Activated CD4-positive, alpha-beta T cell treated with anti-CD3 and anti-CD28 coated beads for 36 hours (primary cell): ENCODE measurements at regions of chr2 and their contacts with region 1.

Region 1: GRCh38 chr2:64330281-64331113 is 123.5 kb upstream of the LGALSL start:
- DNase-seq: peak; percentile 87
- ATAC-seq: no peak
- H3K4me3 Mint-ChIP-seq: peak overlapping the region; percentile 8
- H3K27ac Mint-ChIP-seq: no peak overlapping the region
- H3K4me1 Mint-ChIP-seq: peaks cover 48% of the 10 kb centered on the region
- H3K27me3 Mint-ChIP-seq: no peaks in the 10 kb centered on the region

Region 2: DNA sequence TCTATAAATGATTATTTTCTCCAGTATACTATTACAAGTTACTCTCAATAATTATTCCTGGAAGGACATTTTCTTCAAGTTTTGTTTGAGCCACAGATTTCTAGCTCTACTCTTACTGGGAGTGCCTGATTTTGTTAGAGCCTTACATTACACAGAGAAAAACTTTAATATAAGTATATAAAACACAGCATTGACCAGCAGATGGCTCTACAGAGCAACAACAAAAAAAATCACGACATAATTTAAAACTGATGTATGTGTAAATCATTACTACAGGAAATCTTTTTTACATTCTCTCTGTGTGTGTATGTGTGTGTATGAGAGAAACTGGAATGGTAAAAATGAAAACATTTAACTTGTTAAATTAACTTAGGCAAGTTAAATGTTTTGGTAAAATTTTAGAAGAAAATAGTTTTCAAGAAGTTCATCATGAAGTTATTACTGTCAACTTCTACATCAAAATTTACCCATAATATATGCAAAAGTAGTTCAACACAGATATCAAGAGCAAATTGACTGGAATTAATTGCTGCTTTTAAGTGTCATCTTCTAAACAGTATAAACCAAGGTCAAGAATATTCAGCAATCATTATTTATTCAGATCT is 638.4 kb before region 1 on chr2:
- CTCF ChIA-PET with region 1: no interaction called
- POLR2A ChIA-PET with region 1: no interaction called
- intact Hi-C with region 1: loop called in 1 of 2 experiments (anchors 5 kb)
- DNase-seq: peak; percentile 14
- ATAC-seq: no peak
- H3K4me3 Mint-ChIP-seq: no peak overlapping the region
- H3K27ac Mint-ChIP-seq: no peak overlapping the region
- H3K4me1 Mint-ChIP-seq: no peaks in the 10 kb centered on the region
- H3K27me3 Mint-ChIP-seq: no peaks in the 10 kb centered on the region

Region 3: DNA sequence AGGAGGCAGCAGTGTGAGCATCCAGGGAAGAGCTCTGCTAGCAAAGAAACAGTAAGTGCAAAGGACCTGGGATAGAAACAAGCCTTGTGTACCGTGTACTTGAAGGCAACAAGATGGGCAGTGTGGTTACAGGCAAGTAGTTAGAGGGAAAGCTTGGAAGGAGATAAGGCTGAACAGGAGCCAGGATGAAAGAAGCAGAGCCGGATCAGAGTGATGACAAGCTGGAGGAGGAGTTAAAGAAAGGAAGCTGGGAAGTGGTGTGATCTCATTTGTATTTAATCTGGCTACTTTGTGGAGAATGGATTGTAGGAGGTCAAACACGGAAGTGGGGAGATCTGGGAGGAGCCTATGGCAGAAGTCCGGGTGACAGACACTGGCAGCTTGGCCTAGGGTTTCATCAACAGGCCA is 266.6 kb before region 1 on chr2:
- CTCF ChIA-PET with region 1: interaction called, 3 read pairs
- POLR2A ChIA-PET with region 1: interaction called, 11 read pairs
- intact Hi-C with region 1: loop called in 1 of 2 experiments (anchors 1 kb)
- DNase-seq: no peak
- ATAC-seq: no peak
- H3K4me3 Mint-ChIP-seq: no peak overlapping the region
- H3K27ac Mint-ChIP-seq: peak overlapping the region; percentile 44
- H3K4me1 Mint-ChIP-seq: peaks cover 30% of the 10 kb centered on the region
- H3K27me3 Mint-ChIP-seq: no peaks in the 10 kb centered on the region

Region 4: GRCh38 chr2:64165706-64166105 is 164.8 kb before region 1 on chr2:
- CTCF ChIA-PET with region 1: interaction called, 3 read pairs
- POLR2A ChIA-PET with region 1: no interaction called
- intact Hi-C with region 1: loop called in 1 of 2 experiments (anchors 1 kb)
- DNase-seq: no peak
- ATAC-seq: peak; percentile 41
- H3K4me3 Mint-ChIP-seq: no peak overlapping the region
- H3K27ac Mint-ChIP-seq: no peak overlapping the region
- H3K4me1 Mint-ChIP-seq: no peaks in the 10 kb centered on the region
- H3K27me3 Mint-ChIP-seq: no peaks in the 10 kb centered on the region

Region 5: GRCh38 chr2:64318476-64318748 is 12.1 kb before region 1 on chr2:
- CTCF ChIA-PET with region 1: interaction called, 11 read pairs
- POLR2A ChIA-PET with region 1: no interaction called
- intact Hi-C with region 1: no loop called
- DNase-seq: no peak
- ATAC-seq: peak; percentile 85
- H3K4me3 Mint-ChIP-seq: no peak overlapping the region
- H3K27ac Mint-ChIP-seq: no peak overlapping the region
- H3K4me1 Mint-ChIP-seq: peaks cover 6% of the 10 kb centered on the region
- H3K27me3 Mint-ChIP-seq: peaks cover 2% of the 10 kb centered on the region

Region 6: DNA sequence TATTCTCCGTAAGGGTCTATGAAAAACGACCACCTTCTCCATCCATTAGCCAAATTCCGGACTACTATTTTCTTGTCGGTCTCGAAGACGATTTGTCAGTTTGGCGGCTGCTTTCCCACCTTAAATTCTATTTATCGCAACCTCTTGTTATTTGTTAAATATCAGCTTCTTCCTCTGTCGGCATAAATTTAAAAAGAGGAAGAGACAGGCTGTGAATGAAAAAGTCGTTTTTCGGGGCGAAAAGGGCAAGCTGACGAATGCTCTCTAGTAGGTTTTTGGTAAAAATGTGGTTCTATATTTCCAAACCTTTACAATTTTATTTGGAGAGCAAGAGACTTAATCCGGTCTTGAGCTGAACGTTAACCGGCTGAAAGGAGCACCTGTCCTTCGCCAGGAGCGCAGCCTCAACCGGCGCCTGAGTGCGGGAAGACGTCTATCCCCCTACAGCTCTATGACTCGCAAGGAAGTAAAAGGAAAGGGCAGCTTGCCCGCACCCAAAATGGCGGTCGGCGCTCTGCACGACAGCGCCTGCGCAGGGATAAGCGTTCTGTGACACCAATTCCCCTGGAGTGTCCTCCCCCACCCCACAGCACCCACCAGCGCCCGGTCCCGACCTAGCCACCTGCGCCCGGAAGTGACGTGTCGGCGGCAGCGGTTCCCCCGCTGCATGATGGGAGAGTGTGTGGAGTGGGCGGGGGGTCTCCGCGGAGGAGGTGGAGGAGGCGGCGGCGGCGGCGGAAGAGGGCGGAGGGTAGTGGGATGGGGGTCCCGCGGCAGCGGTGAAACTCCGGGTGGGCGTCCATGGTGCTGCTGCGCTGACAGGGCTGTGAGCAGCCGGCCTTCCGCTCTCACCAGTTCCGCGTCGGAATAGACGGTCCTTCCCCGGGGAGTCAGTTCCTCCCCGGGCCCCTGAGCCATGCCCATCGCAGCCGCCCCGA is 193.4 kb after region 1 on chr2 and contains the start of gene AFTPH:
- CTCF ChIA-PET with region 1: interaction called, 28 read pairs
- POLR2A ChIA-PET with region 1: interaction called, 4 read pairs
- intact Hi-C with region 1: loop called in 1 of 2 experiments (anchors 1 kb)
- DNase-seq: peak; percentile 100
- ATAC-seq: peak; percentile 93
- H3K4me3 Mint-ChIP-seq: peak within 1 kb of the TSS; percentile 95
- H3K27ac Mint-ChIP-seq: peak within 1 kb of the TSS; percentile 100
- H3K4me1 Mint-ChIP-seq: peaks cover 30% of the 10 kb centered on the region
- H3K27me3 Mint-ChIP-seq: no peaks in the 10 kb centered on the region
- total RNA-seq, gene AFTPH: 32.3 to 35.2 TPM

Region 7: DNA sequence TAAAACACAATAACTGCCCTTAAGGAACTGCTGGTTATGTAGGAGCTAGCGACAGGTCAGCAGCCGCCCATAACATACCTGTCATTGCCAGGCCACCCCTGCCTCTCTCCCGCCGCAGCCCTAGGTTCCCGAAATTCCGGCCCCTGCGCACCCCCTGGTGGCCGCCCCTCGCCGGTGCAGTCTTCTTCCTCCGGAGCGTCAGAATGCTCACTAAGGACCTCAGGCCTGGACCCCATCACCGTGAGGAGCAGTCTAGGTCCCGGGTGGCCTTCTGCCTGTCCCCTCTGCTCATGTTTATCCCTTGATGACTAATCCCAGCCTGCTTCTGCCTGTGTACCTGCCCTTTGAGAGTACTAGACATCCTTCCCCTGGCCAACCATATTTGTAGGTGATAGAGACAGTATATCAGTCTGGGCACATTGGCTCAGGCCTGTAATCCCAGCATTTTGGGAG is 543.0 kb after region 1 on chr2:
- CTCF ChIA-PET with region 1: interaction called, 5 read pairs
- POLR2A ChIA-PET with region 1: no interaction called
- intact Hi-C with region 1: loop called (anchors 1 to 2 kb)
- DNase-seq: peak; percentile 89
- ATAC-seq: peak; percentile 93
- H3K4me3 Mint-ChIP-seq: no peak overlapping the region
- H3K27ac Mint-ChIP-seq: no peak overlapping the region
- H3K4me1 Mint-ChIP-seq: peaks cover 3% of the 10 kb centered on the region
- H3K27me3 Mint-ChIP-seq: no peaks in the 10 kb centered on the region